Gastrocnemius medialis (tissue), 4 donors: ENCODE measurements at regions of chr12 and their contacts with region 1.

Region 1: GRCh38 chr12:56117778-56118687 is at the start of gene ZC3H10:
- DNase-seq: peak; percentile 98 to 99
- ATAC-seq: peak; percentile 76
- H3K4me3 ChIP-seq: peak within 1 kb of the TSS; percentile 82 to 94 (median 88)
- H3K27ac ChIP-seq: peak within 1 kb of the TSS; percentile 93 to 99 (median 98)
- H3K4me1 ChIP-seq: peaks cover 44 to 49% of the 10 kb centered on the region in 2 donors
- H3K27me3 ChIP-seq: no peaks in the 10 kb centered on the region
- CTCF ChIP-seq: peak; percentile 29 to 76 (median 58)
- POLR2A ChIP-seq: peak; percentile 91 to 96
- total RNA-seq, gene ZC3H10: 3.1 to 9.1 (median 3.7) TPM

Region 2: GRCh38 chr12:55728939-55729823 is 388.9 kb before region 1 on chr12 and contains the start of gene CD63:
- in situ Hi-C with region 1: no loop called
- intact Hi-C with region 1: loop called (anchors 5 kb)
- DNase-seq: peak; percentile 88 to 93
- ATAC-seq: peak; percentile 76 to 84
- H3K4me3 ChIP-seq: peak within 1 kb of the TSS; percentile 84 to 96 (median 92)
- H3K27ac ChIP-seq: peak within 1 kb of the TSS; percentile 99 to 100 (median 99)
- H3K4me1 ChIP-seq: peaks cover 24 to 36% of the 10 kb centered on the region in 2 donors
- H3K27me3 ChIP-seq: no peaks in the 10 kb centered on the region
- CTCF ChIP-seq: no peak
- POLR2A ChIP-seq: peak; percentile 93 to 95
- total RNA-seq, gene CD63: 423 to 1,107 (median 634) TPM

Region 3: GRCh38 chr12:56127888-56128669 is 10.0 kb after region 1 on chr12 and contains the start of gene ESYT1:
- in situ Hi-C with region 1: no loop called
- intact Hi-C with region 1: loop called (anchors 1 kb)
- DNase-seq: peak; percentile 99 to 100
- ATAC-seq: peak; percentile 87
- H3K4me3 ChIP-seq: peak within 1 kb of the TSS; percentile 71 to 95 (median 88)
- H3K27ac ChIP-seq: peak within 1 kb of the TSS; percentile 92 to 99 (median 98)
- H3K4me1 ChIP-seq: peaks cover 44 to 51% of the 10 kb centered on the region in 2 donors
- H3K27me3 ChIP-seq: no peaks in the 10 kb centered on the region
- CTCF ChIP-seq: peak in 1 of 5 experiments; percentile 13
- POLR2A ChIP-seq: peak; percentile 98 to 99
- total RNA-seq, gene ESYT1: 45.9 to 77.7 (median 62.1) TPM

Region 4: DNA sequence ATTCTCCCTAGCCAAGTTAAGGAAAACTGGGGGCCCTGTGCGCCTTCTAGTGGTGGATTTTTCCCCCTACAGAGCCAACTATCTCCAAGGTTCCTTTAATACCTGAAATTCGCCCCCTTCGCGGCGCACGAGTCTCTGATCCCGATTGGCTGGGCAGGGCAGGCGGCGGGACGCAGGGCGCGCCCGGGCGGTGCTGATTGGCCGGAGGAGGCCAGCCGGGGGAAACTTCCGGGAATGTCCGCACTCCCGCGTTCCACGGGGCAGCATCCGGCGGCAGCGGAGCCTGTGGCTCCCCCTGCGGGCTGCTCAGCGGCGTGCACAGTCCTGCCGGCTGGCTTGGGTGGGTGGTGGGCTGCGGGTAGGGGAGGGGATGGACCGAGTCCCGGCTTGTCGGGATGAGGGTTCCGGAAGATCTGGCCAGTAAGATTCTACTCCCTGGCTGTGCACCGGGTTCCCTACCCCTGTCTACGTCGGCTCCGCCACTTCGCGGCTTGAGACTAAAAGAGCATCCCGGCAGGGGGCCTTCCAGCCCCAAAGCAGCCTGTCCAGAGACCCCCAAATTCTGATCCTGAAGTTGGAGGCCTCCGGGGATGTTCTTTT is 106.2 kb after region 1 on chr12 and contains the start of gene NABP2:
- in situ Hi-C with region 1: loop called in 1 of 4 experiments (anchors 10 kb)
- intact Hi-C with region 1: loop called (anchors 1 kb)
- DNase-seq: peak; percentile 97 to 99
- ATAC-seq: peak; percentile 79 to 84
- H3K4me3 ChIP-seq: peak within 1 kb of the TSS; percentile 63 to 85 (median 79)
- H3K27ac ChIP-seq: peak within 1 kb of the TSS; percentile 96 to 100 (median 98)
- H3K4me1 ChIP-seq: peaks cover 34 to 45% of the 10 kb centered on the region in 2 donors
- H3K27me3 ChIP-seq: no peaks in the 10 kb centered on the region
- CTCF ChIP-seq: peak; percentile 94 to 96 (median 95)
- POLR2A ChIP-seq: peak in 1 of 2 donors; percentile 25
- total RNA-seq, gene NABP2: 29.6 to 75.0 (median 42.8) TPM

Region 5: DNA sequence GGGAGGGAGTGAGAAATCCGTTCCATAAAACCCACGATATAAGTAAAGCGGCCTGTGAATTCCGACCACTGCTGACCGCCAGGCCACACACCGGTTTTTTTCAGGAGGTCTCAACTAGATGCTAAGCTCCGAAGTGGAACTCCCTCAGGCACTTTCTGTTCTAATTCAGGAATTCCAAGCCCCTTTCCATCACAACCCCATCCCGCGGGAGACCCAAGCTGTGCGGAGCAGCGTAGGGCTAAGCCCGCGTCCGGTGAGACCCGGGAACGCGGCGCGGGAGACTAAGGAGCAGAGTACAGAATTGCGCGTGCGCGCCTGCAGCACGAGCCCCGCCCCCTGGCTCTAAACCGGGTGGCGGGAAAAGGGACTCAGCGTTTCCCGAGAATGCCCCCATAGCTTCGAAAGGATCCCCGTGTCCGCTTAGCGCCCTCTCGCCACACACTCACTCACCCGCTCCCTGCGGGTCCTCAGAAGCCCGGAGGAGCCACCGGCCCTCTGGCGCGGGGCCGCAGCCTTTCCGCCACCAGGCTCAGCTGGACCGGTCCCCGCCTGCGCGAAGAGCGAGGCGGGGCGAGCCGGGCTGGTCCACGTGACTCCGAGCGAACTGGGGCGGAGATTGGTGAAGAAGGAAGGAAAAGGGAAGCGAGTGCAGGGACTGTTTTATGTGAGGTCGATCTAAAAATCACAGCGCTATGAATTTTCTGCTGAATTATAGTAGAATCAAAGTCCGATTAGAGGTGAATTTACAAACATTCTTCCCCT is 331.0 kb after region 1 on chr12 and contains the start of gene TIMELESS:
- in situ Hi-C with region 1: no loop called
- intact Hi-C with region 1: loop called (anchors 5 kb)
- DNase-seq: peak; percentile 77 to 85
- ATAC-seq: peak; percentile 98 to 99
- H3K4me3 ChIP-seq: peak within 1 kb of the TSS; percentile 75 to 83 (median 82)
- H3K27ac ChIP-seq: peak within 1 kb of the TSS; percentile 84 to 92 (median 88)
- H3K4me1 ChIP-seq: peaks cover 6 to 8% of the 10 kb centered on the region in 2 donors
- H3K27me3 ChIP-seq: no peaks in the 10 kb centered on the region
- CTCF ChIP-seq: peak in 2 of 5 experiments; percentile 15 to 25
- POLR2A ChIP-seq: peak; percentile 47 to 57
- total RNA-seq, gene TIMELESS: 1.9 to 4.6 (median 2.5) TPM

Region 6: GRCh38 chr12:56490360-56490759 is 372.3 kb after region 1 on chr12:
- in situ Hi-C with region 1: no loop called
- intact Hi-C with region 1: no loop called
- DNase-seq: no peak
- ATAC-seq: no peak
- H3K4me3 ChIP-seq: no peak overlapping the region
- H3K27ac ChIP-seq: no peak overlapping the region
- H3K4me1 ChIP-seq: peaks cover 5 to 18% of the 10 kb centered on the region in 2 donors
- H3K27me3 ChIP-seq: peaks cover 16 to 37% (median 28%) of the 10 kb centered on the region in 3 donors
- CTCF ChIP-seq: no peak
- POLR2A ChIP-seq: no peak

Region 7: GRCh38 chr12:57846577-57847319 is 1728.7 kb after region 1 on chr12 and contains the start of gene CTDSP2:
- in situ Hi-C with region 1: no loop called
- intact Hi-C with region 1: loop called (anchors 5 kb)
- DNase-seq: peak; percentile 100
- ATAC-seq: peak; percentile 58 to 60
- H3K4me3 ChIP-seq: peak within 1 kb of the TSS; percentile 82 to 98 (median 96)
- H3K27ac ChIP-seq: peak within 1 kb of the TSS; percentile 93 to 99 (median 98)
- H3K4me1 ChIP-seq: peaks cover 69% of the 10 kb centered on the region in 2 donors
- H3K27me3 ChIP-seq: no peaks in the 10 kb centered on the region
- CTCF ChIP-seq: peak in 1 of 5 experiments; percentile 24
- POLR2A ChIP-seq: peak; percentile 82 to 98
- total RNA-seq, gene CTDSP2: 66.0 to 116 (median 83.4) TPM